Transverse colon (tissue), 4 donors: ENCODE measurements at regions of chr4 and their contacts with region 1.

Region 1: DNA sequence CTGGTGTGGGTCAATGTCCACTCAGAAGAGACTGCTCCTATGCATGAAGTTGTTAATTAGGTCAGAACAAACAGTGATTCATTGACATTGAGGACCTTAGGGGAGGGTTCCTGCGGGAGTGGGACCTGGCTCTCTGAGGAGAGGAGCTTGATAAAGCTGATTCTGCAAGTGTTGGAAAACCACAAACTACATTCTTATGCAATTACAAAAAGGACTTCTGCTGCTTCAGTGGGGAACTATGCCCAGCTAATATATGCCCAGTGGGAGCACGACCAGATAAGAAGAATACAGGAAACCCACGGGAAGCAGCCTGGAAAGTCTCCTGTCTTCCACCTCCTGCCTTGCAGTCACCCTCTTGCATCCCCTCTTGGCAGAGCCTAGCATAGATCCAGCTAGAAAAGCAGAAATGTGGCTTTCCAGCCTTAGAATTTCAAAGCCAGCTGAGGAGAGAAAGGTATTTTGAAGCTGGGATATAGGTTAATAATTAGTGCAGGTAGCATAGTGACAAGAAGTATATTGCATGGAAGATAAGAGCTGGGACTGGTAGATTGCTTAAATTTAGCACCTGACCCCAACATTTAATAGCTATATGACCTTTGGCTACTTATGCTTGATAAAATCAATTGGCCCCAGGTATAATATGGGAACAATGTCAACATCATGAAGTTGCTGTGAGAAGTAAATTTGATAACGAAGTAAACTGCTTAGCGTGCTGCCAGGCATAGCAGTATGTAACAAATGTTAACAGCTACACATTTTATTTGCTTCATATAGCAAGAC is 34.9 kb upstream of the UGT8 start:
- DNase-seq: no peak
- H3K4me3 ChIP-seq: no peak overlapping the region
- H3K27ac ChIP-seq: peak overlapping the region; percentile 48 to 79 (median 72)
- H3K4me1 ChIP-seq: peaks cover 0 to 25% (median 15%) of the 10 kb centered on the region in 4 donors
- H3K27me3 ChIP-seq: no peaks in the 10 kb centered on the region
- CTCF ChIP-seq: no peak
- EP300 ChIP-seq: no peak
- POLR2A ChIP-seq: no peak

Region 2: DNA sequence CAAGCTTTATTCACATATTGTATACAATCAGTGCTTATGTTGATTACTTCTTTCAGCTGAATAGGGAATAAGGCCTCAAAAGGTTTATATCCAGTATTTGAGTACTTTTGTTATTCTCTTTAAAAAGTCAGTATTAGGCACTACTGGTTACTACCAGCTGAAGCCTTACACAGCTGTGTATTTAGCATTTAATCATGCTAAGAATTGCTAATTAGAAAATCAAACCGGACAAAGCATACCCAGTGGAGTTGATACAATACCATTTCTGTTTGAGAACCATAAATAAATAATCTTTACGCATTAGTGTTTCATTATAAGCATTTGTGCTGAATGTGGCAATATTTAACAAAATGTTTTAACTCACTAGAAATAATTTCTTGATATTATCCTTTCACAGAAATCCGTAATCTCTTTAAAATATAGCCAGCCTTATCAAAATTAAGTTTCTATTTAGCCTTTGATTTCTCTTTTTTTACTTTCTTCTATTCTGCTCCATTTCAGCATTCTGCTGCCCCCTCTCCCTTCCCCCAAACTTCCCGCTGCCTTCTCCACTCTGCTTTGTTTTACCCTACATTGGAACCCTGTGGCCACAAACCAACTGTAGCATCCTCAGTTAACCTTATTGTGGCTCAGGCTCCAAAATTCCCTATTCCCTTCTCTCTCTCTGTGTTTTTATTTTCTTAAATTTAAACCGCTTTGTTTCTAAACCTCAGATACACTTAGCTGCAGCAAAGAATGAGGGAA is 72.6 kb after region 1 on chr4:
- in situ Hi-C with region 1: no loop called
- intact Hi-C with region 1: loop called (anchors 10 kb)
- DNase-seq: no peak
- H3K4me3 ChIP-seq: no peak overlapping the region
- H3K27ac ChIP-seq: no peak overlapping the region
- H3K4me1 ChIP-seq: no peaks in the 10 kb centered on the region
- H3K27me3 ChIP-seq: no peaks in the 10 kb centered on the region
- CTCF ChIP-seq: no peak
- EP300 ChIP-seq: no peak
- POLR2A ChIP-seq: no peak